Activated CD4-positive, alpha-beta T cell treated with anti-CD3 and anti-CD28 coated beads for 36 hours (primary cell): ENCODE measurements at regions of chr9 and their contacts with region 1.

Region 1: GRCh38 chr9:110256380-110257096 is at the start of gene TXN:
- DNase-seq: peak; percentile 94
- ATAC-seq: peak; percentile 77
- H3K4me3 Mint-ChIP-seq: peak within 1 kb of the TSS; percentile 95
- H3K27ac Mint-ChIP-seq: peak within 1 kb of the TSS; percentile 99
- H3K4me1 Mint-ChIP-seq: peaks cover 60% of the 10 kb centered on the region
- H3K27me3 Mint-ChIP-seq: no peaks in the 10 kb centered on the region
- total RNA-seq, gene TXN: 449 to 553 TPM

Region 2: GRCh38 chr9:109887079-109887478 is 369.5 kb before region 1 on chr9:
- CTCF ChIA-PET with region 1: no interaction called
- POLR2A ChIA-PET with region 1: no interaction called
- intact Hi-C with region 1: loop called (anchors 2 to 10 kb)
- DNase-seq: no peak
- ATAC-seq: peak; percentile 48
- H3K4me3 Mint-ChIP-seq: no peak overlapping the region
- H3K27ac Mint-ChIP-seq: peak overlapping the region; percentile 88
- H3K4me1 Mint-ChIP-seq: peaks cover 45% of the 10 kb centered on the region
- H3K27me3 Mint-ChIP-seq: no peaks in the 10 kb centered on the region

Region 3: GRCh38 chr9:109972026-109972882 is 284.3 kb before region 1 on chr9:
- CTCF ChIA-PET with region 1: no interaction called
- POLR2A ChIA-PET with region 1: no interaction called
- intact Hi-C with region 1: loop called (anchors 2 to 10 kb)
- DNase-seq: peak; percentile 47
- ATAC-seq: peak; percentile 33
- H3K4me3 Mint-ChIP-seq: no peak overlapping the region
- H3K27ac Mint-ChIP-seq: peak overlapping the region; percentile 75
- H3K4me1 Mint-ChIP-seq: peaks cover 90% of the 10 kb centered on the region
- H3K27me3 Mint-ChIP-seq: no peaks in the 10 kb centered on the region

Region 4: GRCh38 chr9:110197330-110198187 is 59.0 kb before region 1 on chr9:
- CTCF ChIA-PET with region 1: no interaction called
- POLR2A ChIA-PET with region 1: no interaction called
- intact Hi-C with region 1: no loop called
- DNase-seq: no peak
- ATAC-seq: no peak
- H3K4me3 Mint-ChIP-seq: no peak overlapping the region
- H3K27ac Mint-ChIP-seq: no peak overlapping the region
- H3K4me1 Mint-ChIP-seq: no peaks in the 10 kb centered on the region
- H3K27me3 Mint-ChIP-seq: no peaks in the 10 kb centered on the region

Region 5: DNA sequence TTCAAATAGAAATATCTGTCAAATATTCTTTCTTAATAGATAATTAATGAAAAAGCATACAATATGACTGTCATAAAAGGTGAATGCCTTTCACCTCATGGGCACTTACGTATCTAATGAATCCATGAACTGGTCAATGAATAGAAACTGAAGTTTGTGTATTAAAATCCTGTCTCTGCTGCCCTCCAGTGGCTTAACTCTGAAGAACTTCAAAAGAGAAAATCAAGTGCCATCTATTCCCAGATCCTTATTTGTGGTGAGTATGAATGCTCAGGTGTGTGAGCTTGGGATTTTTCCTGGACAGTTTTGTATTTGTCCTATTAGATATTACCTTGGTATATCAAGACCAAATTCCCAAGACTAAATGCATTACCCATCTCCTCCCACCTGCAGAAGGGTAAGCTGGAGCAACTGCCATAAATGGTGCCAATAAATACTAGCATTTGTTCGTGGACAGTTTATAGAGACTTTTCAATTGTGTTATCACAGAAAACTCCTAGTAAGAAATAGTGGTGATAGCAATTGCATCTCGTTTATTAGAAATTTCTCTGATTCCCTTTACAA is 367.0 kb after region 1 on chr9:
- CTCF ChIA-PET with region 1: no interaction called
- POLR2A ChIA-PET with region 1: interaction called, 3 read pairs
- intact Hi-C with region 1: loop called (anchors 2 to 10 kb)
- DNase-seq: peak; percentile 28
- ATAC-seq: no peak
- H3K4me3 Mint-ChIP-seq: no peak overlapping the region
- H3K27ac Mint-ChIP-seq: no peak overlapping the region
- H3K4me1 Mint-ChIP-seq: peaks cover 16% of the 10 kb centered on the region
- H3K27me3 Mint-ChIP-seq: peaks cover 8% of the 10 kb centered on the region

Region 6: DNA sequence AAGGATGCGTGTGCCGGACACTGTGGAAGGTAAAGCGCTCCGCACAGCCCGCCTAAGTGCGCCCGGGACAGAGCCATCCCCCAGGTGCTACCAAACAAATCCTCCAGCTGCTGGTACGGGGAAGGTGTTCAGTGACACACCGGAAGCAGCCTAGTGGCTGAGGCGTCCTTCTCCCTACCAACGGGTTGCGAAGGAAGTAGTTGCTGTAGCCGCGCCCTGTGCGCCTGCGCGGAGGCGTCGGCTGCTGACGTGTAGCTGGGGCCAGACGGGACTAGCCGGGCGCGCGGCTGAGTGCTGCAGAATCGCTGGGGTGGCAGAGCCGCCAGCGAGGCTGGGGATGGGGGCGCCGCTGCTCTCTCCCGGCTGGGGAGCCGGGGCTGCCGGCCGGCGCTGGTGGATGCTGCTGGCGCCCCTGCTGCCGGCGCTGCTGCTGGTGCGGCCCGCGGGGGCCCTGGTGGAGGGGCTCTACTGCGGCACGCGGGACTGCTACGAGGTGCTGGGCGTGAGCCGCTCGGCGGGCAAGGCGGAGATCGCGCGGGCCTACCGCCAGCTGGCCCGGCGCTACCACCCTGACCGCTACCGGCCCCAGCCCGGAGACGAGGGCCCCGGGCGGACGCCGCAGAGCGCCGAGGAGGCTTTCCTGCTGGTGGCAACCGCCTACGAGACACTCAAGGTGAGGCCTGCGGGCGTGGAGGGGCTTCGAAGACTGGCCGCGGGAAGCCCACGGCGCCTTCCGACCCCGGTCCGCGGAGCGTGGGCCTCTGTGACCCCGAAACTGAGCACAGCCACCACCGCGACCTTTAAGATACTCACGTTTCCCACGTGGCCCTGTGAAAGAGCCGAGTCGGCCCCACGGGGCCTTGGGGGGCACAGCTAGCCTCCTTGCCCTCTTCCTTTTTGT is 1374.8 kb after region 1 on chr9 and contains the start of gene DNAJC25:
- CTCF ChIA-PET with region 1: no interaction called
- POLR2A ChIA-PET with region 1: interaction called, 3 read pairs
- intact Hi-C with region 1: loop called in 1 of 2 experiments (anchors 10 kb)
- DNase-seq: peak; percentile 98
- ATAC-seq: peak; percentile 98
- H3K4me3 Mint-ChIP-seq: peak within 1 kb of the TSS; percentile 94
- H3K27ac Mint-ChIP-seq: peak within 1 kb of the TSS; percentile 91
- H3K4me1 Mint-ChIP-seq: peaks cover 47% of the 10 kb centered on the region
- H3K27me3 Mint-ChIP-seq: no peaks in the 10 kb centered on the region
- total RNA-seq, gene DNAJC25: 6.3 to 7.5 TPM